Activated CD8-positive, alpha-beta T cell treated with anti-CD3 and anti-CD28 coated beads for 36 hours (primary cell): ENCODE measurements at regions of chr1 and their contacts with region 1.

Region 1: DNA sequence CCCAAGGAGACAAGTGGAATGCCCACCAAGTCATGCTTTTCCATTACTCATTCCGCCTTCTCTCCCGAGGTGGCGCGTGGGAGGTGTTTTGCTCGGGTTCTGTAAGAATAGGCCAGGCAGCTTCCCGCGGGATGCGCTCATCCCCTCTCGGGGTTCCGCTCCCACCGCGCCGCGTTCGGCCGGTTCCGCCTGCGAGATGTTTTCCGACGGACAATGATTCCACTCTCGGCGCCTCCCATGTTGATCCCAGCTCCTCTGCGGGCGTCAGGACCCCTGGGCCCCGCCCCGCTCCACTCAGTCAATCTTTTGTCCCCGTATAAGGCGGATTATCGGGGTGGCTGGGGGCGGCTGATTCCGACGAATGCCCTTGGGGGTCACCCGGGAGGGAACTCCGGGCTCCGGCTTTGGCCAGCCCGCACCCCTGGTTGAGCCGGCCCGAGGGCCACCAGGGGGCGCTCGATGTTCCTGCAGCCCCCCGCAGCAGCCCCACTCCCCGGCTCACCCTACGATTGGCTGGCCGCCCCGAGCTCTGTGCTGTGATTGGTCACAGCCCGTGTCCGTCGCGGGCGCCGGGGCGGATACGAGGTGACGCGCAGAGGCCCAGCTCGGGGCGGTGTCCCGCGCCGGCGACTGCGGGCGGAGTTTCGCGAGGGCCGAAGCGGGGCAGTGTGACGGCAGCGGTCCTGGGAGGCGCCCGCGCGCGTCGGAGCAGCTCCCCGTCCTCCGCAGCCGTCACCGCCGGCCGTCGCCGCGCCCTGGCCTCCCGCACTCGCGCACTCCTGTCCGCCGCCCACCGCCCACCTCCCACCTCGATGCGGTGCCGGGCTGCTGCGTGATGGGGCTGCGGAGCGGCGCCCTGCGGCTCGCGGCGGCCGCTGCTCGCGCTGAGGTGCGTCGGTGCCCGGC is at the start of gene KIF1B:
- DNase-seq: peak; percentile 96
- ATAC-seq: peak; percentile 98
- H3K4me3 Mint-ChIP-seq: peak within 1 kb of the TSS; percentile 80
- H3K27ac Mint-ChIP-seq: peak within 1 kb of the TSS; percentile 57
- H3K4me1 Mint-ChIP-seq: peaks cover 26% of the 10 kb centered on the region
- H3K27me3 Mint-ChIP-seq: no peaks in the 10 kb centered on the region
- CTCF ChIP-seq: peak; percentile 99
- total RNA-seq, gene KIF1B: 7.1 to 8.9 TPM

Region 2: GRCh38 chr1:9996624-9997582 is 213.3 kb before region 1 on chr1 and contains the start of gene RBP7:
- CTCF ChIA-PET with region 1: no interaction called
- POLR2A ChIA-PET with region 1: no interaction called
- intact Hi-C with region 1: no loop called
- DNase-seq: peak; percentile 15
- ATAC-seq: peak; percentile 34
- H3K4me3 Mint-ChIP-seq: peak within 1 kb of the TSS; percentile 62
- H3K27ac Mint-ChIP-seq: no peak within 1 kb of the TSS
- H3K4me1 Mint-ChIP-seq: peaks cover 6% of the 10 kb centered on the region
- H3K27me3 Mint-ChIP-seq: peaks cover 24% of the 10 kb centered on the region
- CTCF ChIP-seq: no peak
- total RNA-seq, gene RBP7: not detected

Region 3: DNA sequence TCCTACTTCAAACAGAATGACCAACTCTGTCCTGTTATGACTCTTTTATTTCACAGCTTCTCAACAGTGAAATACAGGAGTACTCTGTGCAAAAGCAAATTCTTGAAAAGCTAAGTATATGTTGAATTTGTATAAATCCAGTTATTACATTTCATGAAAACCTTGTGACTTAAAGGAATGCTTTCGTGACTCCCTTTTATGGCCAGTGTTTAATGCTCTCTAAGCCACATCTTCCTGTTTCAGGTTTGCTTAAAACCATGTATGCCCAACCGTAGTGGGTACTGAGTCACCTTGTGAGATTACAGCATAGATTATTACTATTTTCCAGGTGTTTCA is 40.0 kb before region 1 on chr1:
- CTCF ChIA-PET with region 1: interaction called, 19 read pairs
- POLR2A ChIA-PET with region 1: interaction called, 6 read pairs
- intact Hi-C with region 1: no loop called
- DNase-seq: peak; percentile 55
- ATAC-seq: peak; percentile 86
- H3K4me3 Mint-ChIP-seq: peak overlapping the region; percentile 23
- H3K27ac Mint-ChIP-seq: peak overlapping the region; percentile 98
- H3K4me1 Mint-ChIP-seq: peaks cover 48% of the 10 kb centered on the region
- H3K27me3 Mint-ChIP-seq: no peaks in the 10 kb centered on the region
- CTCF ChIP-seq: no peak

Region 4: DNA sequence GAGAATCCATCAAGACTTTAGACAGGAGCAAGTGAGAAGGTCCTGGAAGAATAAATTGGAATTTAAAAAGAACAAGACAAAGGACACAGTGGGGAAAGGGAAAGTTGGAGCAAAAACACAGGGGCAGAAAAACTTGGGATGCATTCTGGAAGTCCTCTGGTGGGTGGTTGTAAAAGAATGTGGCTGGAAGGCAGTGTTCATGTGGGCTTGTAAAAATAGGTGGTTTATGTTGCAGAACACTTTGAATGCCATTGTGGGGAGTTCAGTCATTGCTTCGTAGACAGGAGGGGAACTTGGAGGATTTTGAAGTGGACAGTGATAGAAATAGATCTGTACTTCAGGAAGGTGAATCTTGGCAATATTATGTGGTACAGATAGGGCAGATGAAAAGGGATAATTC is 15.4 kb after region 1 on chr1:
- CTCF ChIA-PET with region 1: interaction called, 34 read pairs
- POLR2A ChIA-PET with region 1: no interaction called
- intact Hi-C with region 1: no loop called
- DNase-seq: no peak
- ATAC-seq: no peak
- H3K4me3 Mint-ChIP-seq: no peak overlapping the region
- H3K27ac Mint-ChIP-seq: no peak overlapping the region
- H3K4me1 Mint-ChIP-seq: peaks cover 5% of the 10 kb centered on the region
- H3K27me3 Mint-ChIP-seq: no peaks in the 10 kb centered on the region
- CTCF ChIP-seq: no peak

Region 5: DNA sequence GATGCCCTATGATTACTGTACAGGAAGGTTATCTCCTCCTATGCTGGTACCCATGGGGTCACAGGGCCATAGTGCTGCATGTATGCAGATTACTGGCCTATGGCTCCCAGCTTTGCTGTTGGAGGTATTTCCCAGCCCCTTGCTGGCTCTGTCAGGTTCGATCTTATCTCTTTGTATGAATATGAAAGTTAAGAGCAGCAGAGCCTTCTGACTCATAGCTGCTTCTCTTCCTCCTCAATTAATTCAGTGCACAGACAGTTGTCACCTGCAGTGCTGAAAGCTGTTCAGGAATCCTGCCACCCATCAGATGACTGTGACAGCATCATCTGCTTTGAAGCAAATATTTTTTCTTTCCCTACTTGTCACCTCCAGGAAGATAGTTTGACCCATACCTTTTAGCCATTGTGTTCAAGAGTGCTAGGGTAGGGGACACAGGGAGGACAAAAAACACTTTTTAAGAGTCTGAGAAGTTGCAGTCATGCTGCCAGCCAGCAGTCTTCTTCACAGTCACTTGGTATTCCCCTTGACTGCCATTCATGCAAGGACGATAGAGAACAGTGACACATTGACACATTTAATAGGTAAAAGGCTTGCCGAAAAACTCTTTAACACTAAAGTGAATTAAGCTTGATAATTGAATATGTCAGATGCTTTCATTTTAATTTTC is 73.3 kb after region 1 on chr1:
- CTCF ChIA-PET with region 1: interaction called, 12 read pairs
- POLR2A ChIA-PET with region 1: no interaction called
- intact Hi-C with region 1: no loop called
- DNase-seq: peak; percentile 61
- ATAC-seq: peak; percentile 88
- H3K4me3 Mint-ChIP-seq: no peak overlapping the region
- H3K27ac Mint-ChIP-seq: peak overlapping the region; percentile 42
- H3K4me1 Mint-ChIP-seq: peaks cover 28% of the 10 kb centered on the region
- H3K27me3 Mint-ChIP-seq: no peaks in the 10 kb centered on the region
- CTCF ChIP-seq: no peak

Region 6: DNA sequence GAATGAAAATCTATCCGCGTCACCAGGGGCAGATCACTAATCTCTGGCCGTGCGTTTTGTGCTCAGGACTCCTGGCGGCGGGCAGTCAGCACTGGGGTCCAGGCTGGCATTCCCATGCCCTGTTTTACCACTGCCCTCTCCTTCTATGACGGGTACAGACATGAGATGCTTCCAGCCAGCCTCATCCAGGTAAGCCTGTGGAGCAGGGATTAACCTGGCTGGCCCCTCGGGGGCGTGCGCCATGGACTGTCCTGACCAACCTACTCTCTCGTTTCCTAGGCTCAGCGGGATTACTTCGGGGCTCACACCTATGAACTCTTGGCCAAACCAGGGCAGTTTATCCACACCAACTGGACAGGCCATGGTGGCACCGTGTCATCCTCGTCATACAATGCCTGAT is 209.2 kb after region 1 on chr1:
- CTCF ChIA-PET with region 1: no interaction called
- POLR2A ChIA-PET with region 1: no interaction called
- intact Hi-C with region 1: no loop called
- DNase-seq: no peak
- ATAC-seq: no peak
- H3K4me3 Mint-ChIP-seq: no peak overlapping the region
- H3K27ac Mint-ChIP-seq: no peak overlapping the region
- H3K4me1 Mint-ChIP-seq: peaks cover 4% of the 10 kb centered on the region
- H3K27me3 Mint-ChIP-seq: no peaks in the 10 kb centered on the region
- CTCF ChIP-seq: no peak

Region 7: DNA sequence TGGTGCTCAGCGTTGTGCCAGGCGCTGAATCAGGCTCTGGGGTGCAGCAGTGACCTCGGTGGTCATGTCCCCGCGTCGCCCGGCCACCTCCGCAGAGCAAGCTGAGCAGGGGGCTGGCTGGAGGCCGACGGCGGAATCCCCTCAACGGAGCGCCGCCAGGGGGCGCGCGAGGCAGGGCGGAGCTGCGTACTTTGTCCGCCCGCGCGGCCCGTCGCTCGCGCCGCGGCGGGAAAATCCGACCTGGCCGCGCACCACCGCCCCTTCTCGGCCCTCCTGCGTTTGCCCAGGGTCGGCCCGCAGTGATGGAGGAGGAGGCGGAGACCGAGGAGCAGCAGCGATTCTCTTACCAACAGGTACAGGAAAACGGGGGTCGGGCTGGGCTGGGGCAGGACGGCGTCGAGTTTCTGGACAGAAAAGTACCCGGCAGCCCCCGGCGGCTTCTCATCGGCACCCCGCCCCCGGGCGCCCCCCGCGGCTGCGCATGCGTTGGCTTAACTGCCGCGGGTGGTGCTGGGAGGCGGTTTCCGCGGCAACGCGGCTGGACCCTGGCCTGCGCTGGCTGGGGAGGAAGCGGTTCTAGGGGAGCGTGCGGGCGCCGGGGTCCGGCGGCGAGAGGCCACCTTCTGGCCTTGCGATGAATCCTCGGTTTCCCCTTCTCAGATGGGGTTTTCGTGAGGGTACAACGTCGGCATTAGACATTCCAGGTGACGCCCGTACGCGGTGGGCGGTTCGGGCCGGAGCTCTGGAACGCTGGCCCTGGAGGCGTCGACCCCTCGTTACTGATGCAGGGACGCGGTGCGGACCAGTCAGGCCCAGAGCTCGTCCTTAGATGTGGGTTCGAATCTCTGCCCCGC is 220.3 kb after region 1 on chr1 and contains the start of gene CENPS:
- CTCF ChIA-PET with region 1: interaction called, 22 read pairs
- POLR2A ChIA-PET with region 1: interaction called, 4 read pairs
- intact Hi-C with region 1: no loop called
- DNase-seq: peak; percentile 95
- ATAC-seq: peak; percentile 90
- H3K4me3 Mint-ChIP-seq: peak within 1 kb of the TSS; percentile 88
- H3K27ac Mint-ChIP-seq: peak within 1 kb of the TSS; percentile 94
- H3K4me1 Mint-ChIP-seq: peaks cover 16% of the 10 kb centered on the region
- H3K27me3 Mint-ChIP-seq: no peaks in the 10 kb centered on the region
- CTCF ChIP-seq: peak; percentile 98
- total RNA-seq, gene CENPS: 18.3 to 19.4 TPM